Caco-2 (cell line): ENCODE measurements at regions of chr20 and their contacts with region 1.

Region 1: DNA sequence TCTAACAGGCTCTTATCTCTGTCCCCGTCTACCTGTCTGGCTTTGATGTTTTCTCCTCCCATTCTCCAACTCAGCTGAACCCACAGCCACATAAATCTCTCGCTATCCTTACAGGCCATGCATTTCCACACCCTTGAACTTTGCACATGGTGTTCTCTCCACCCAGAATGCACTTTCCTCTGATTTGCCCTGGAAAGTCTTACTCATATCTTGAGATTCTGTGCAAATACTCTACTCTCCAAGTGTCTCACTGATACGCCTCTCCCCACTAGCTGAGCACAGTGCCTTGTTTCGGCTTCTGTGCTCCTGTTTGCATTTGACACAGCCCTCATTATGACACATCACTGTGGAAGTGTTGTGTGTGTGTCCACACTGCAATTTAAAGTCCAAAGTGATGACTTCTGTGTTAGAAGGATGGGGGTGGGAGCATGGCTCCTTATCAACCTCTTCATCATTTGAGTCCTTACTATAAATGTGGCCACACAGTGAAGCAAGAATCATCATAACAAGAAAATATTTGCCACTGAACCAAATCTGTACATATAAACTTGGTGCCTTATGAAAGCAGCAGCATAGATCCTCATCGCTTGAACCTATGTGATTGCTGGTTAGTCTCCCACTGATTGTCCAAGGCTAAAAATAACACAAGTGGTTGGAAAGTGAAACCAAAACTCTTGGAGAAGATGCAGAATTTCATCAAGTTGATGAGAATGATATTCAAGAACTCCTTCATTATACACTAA is 5.5 kb upstream of the PRELID3B start:
- DNase-seq: peak; percentile 86 to 91
- H3K4me3 ChIP-seq: no peak overlapping the region
- H3K4me3 Mint-ChIP-seq: peak overlapping the region; percentile 48
- H3K27ac Mint-ChIP-seq: peak overlapping the region; percentile 5
- H3K4me1 ChIP-seq: peaks cover 26% of the 10 kb centered on the region
- H3K4me1 Mint-ChIP-seq: peaks cover 37% of the 10 kb centered on the region
- H3K27me3 ChIP-seq: no peaks in the 10 kb centered on the region
- H3K27me3 Mint-ChIP-seq: peaks cover 1% of the 10 kb centered on the region
- CTCF ChIP-seq: no peak

Region 2: DNA sequence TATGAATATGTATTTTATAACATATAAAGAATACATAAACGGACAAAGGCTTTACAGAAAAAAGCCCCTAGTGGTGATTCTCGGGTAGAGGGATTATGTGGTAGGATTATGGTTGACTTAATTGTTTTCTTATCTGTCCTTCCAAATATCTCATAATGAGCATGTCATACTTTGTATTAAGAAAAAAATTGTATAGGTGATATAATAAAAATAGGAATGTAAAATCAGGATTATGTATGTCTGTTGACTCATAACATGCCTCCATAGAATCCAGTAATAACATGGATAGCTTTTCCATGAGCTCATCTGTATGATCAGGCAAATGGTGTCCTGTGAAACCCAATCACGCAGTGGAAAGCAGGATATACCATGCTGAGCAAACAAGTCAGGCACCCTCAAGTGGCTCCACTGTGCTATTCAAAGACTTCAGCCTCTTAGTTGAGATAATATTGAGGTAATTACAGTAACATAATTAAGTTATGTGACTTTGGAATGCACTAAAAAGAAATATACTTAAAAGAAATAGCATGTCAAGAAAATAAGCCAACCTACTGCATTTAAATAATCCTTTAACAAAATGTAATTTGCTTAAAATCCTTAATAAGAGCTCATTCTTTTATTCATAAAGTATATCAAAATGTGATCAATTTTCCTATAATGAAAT is 34.1 kb after region 1 on chr20:
- CTCF ChIA-PET with region 1: interaction called, 3 read pairs
- POLR2A ChIA-PET with region 1: no interaction called
- intact Hi-C with region 1: loop called (anchors 2 kb)
- DNase-seq: no peak
- H3K4me3 ChIP-seq: no peak overlapping the region
- H3K4me3 Mint-ChIP-seq: no peak overlapping the region
- H3K27ac Mint-ChIP-seq: no peak overlapping the region
- H3K4me1 ChIP-seq: peaks cover 10% of the 10 kb centered on the region; the same call in 1 of the 2 replicates
- H3K4me1 Mint-ChIP-seq: no peaks in the 10 kb centered on the region
- H3K27me3 ChIP-seq: no peaks in the 10 kb centered on the region
- H3K27me3 Mint-ChIP-seq: peaks cover 27% of the 10 kb centered on the region
- CTCF ChIP-seq: peak; percentile 66 to 68